Psoas muscle (tissue), 8 donors: ENCODE measurements at regions of chr21 and their contacts with region 1.

Region 1: DNA sequence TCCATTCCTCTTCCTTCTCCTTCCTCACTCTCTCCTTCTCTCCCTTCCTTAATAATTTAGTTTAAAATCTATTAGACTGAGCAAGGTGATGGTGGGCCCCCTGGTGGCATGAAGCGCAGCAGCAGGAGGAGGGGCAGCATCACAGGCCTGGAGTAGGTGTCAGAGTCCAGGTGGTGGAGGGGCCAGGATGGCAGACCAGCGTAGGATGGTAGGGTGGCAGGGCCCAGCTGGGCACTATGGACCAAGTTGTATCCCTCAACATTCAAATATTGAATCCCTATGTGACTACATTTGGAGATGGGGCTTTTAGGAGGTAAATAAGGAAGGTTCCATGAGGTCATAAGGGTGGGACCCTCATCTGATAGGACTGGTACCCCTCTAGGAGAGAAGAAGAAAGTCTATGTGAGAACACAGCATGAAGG is 61.0 kb downstream of the WDR4 start:
- DNase-seq: peak; percentile 45 to 77
- ATAC-seq: peak in 3 of 4 donors; percentile 53 to 63 (median 57)
- H3K4me3 ChIP-seq: no peak overlapping the region
- H3K27ac ChIP-seq: no peak overlapping the region
- H3K4me1 ChIP-seq: no peaks in the 10 kb centered on the region
- H3K27me3 ChIP-seq: peaks cover 2 to 24% (median 3%) of the 10 kb centered on the region in 3 donors
- CTCF ChIP-seq: peak; percentile 72

Region 2: GRCh38 chr21:42593007-42593806 is 225.1 kb before region 1 on chr21:
- intact Hi-C with region 1: loop called in 1 of 2 experiments (anchors 5 kb)
- DNase-seq: peak; percentile 61 to 80
- ATAC-seq: peak; percentile 53 to 74 (median 68)
- H3K4me3 ChIP-seq: no peak overlapping the region
- H3K27ac ChIP-seq: no peak overlapping the region
- H3K4me1 ChIP-seq: no peaks in the 10 kb centered on the region
- H3K27me3 ChIP-seq: peaks cover 0 to 47% (median 9%) of the 10 kb centered on the region in 3 donors
- CTCF ChIP-seq: peak; percentile 60

Region 3: GRCh38 chr21:42636538-42636930 is 181.8 kb before region 1 on chr21:
- intact Hi-C with region 1: loop called in 1 of 2 experiments (anchors 10 kb)
- DNase-seq: no peak
- ATAC-seq: peak in 2 of 4 donors; percentile 27 to 41
- H3K4me3 ChIP-seq: no peak overlapping the region
- H3K27ac ChIP-seq: no peak overlapping the region
- H3K4me1 ChIP-seq: no peaks in the 10 kb centered on the region
- H3K27me3 ChIP-seq: peaks cover 0 to 61% (median 9%) of the 10 kb centered on the region in 3 donors
- CTCF ChIP-seq: no peak

Region 4: DNA sequence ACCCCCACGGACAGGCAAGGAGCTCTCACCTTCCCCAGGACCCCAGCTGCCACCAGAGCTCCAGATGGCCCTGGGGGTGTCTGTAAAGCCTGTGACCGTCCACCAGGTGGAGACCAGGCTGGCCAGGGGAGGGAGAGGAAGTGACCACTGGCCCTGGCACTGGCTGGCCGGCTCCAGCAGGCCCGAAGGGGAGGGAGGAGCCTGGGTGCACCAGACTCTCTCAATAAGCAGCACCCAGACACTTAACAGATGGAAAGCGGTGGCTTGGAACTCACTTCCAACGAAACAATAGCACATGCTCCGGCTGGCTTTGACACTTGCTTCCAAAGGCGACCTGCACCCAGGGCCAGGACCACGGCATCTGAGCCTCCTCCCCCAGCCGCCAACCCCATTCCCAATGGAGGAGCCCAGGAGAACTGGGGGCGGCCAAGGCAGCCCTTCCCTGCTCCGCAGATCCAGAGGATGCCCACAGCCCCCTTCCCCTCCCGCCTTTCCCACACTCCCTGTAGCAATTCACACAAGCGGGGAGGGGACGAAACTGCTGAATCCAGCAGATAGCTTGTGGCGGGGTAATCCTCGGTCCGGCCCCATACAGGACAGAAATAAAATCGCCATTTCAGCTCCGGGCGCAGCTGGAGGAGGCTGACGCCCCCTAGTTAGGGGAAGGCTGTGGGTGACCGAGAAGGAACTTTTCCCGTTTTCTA is 165.7 kb before region 1 on chr21:
- intact Hi-C with region 1: loop called in 1 of 2 experiments (anchors 10 kb)
- DNase-seq: peak; percentile 73 to 80
- ATAC-seq: peak; percentile 55 to 82 (median 75)
- H3K4me3 ChIP-seq: peak overlapping the region; percentile 58
- H3K27ac ChIP-seq: no peak overlapping the region
- H3K4me1 ChIP-seq: peaks cover 6% of the 10 kb centered on the region
- H3K27me3 ChIP-seq: peaks cover 0 to 68% (median 18%) of the 10 kb centered on the region in 3 donors
- CTCF ChIP-seq: peak; percentile 42

Region 5: GRCh38 chr21:42862774-42863503 is 44.6 kb after region 1 on chr21:
- intact Hi-C with region 1: loop called in 1 of 2 experiments (anchors 5 kb)
- DNase-seq: no peak
- ATAC-seq: no peak
- H3K4me3 ChIP-seq: no peak overlapping the region
- H3K27ac ChIP-seq: no peak overlapping the region
- H3K4me1 ChIP-seq: no peaks in the 10 kb centered on the region
- H3K27me3 ChIP-seq: no peaks in the 10 kb centered on the region
- CTCF ChIP-seq: no peak